ENCODE measurements at regions of chr20 and their contacts with region 1.

Region 1: DNA sequence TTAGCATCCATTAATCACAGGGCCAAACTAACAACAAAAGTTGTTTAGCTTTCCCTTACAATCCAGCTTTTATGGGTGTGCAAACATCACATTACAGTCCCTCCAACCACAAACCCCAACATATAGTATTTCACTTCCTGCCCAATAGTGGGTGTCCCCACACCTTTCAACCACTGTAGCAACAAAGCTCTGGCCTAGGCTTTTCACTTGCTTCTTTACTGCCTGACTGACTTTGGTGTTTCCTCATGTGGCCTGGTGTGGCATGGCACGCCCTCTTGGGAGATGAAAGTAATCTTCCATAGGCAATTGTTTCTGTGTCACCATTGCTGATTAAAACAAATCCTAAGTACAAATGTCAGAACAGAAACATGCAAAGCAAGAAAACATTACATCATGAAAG is 46.3 kb downstream of the MCM8 start:
- DNase-seq: peak; percentile 52
- ATAC-seq: peak; percentile 75
- H3K4me3 ChIP-seq: no peak overlapping the region
- H3K4me3 Mint-ChIP-seq: no peak overlapping the region
- H3K27ac ChIP-seq: no peak overlapping the region
- H3K27ac Mint-ChIP-seq: peak overlapping the region; percentile 66
- H3K4me1 ChIP-seq: peaks cover 4 to 10% of the 10 kb centered on the region in 2 donors
- H3K4me1 Mint-ChIP-seq: peaks cover 10% of the 10 kb centered on the region
- H3K27me3 ChIP-seq: no peaks in the 10 kb centered on the region
- H3K27me3 Mint-ChIP-seq: no peaks in the 10 kb centered on the region
- CTCF ChIP-seq: no peak

Region 2: GRCh38 chr20:6024768-6025167 is 28.0 kb after region 1 on chr20:
- CTCF ChIA-PET with region 1: no interaction called
- POLR2A ChIA-PET with region 1: interaction called, 10 read pairs
- intact Hi-C with region 1: no loop called
- DNase-seq: no peak
- ATAC-seq: no peak
- H3K4me3 ChIP-seq: no peak overlapping the region
- H3K4me3 Mint-ChIP-seq: no peak overlapping the region
- H3K27ac ChIP-seq: no peak overlapping the region
- H3K27ac Mint-ChIP-seq: no peak overlapping the region
- H3K4me1 ChIP-seq: no peaks in the 10 kb centered on the region
- H3K4me1 Mint-ChIP-seq: no peaks in the 10 kb centered on the region
- H3K27me3 ChIP-seq: no peaks in the 10 kb centered on the region
- H3K27me3 Mint-ChIP-seq: no peaks in the 10 kb centered on the region
- CTCF ChIP-seq: no peak